ENCODE measurements at regions of chr11 and their contacts with region 1.

Region 1: DNA sequence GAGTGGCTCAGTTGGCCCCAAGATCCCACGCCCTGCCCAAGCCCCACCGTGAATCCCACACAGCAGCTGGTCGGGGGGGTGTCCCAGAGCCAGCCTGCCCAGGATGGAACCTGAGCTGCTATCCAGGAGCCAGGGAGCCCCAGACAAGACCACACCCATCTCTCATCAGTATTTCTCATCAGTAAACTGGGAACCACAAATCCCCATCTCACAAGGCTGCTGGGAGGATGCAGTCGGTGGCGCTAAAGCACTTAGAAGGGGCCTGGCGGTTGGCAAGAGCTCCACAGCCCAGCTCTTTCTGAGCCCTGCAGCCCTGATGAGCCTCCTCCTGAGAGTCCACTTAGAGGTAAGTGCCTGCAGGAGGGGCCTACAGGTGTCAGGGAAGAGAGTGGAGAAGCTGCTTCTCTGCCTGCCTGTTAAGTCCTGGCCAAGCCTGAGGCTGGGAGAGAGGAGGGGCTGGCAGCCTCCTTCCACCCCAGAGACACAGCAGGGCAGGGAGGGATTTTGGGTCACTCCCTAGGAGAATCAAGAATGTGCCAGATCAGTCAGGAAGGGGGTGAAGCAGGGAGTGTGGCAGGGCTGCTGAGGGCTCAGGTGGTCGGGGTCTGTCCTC is 6.1 kb downstream of the FADS3 start:
- DNase-seq: no peak
- ATAC-seq: peak; percentile 27
- H3K4me3 Mint-ChIP-seq: no peak overlapping the region
- H3K27ac Mint-ChIP-seq: no peak overlapping the region
- H3K4me1 Mint-ChIP-seq: peaks cover 22% of the 10 kb centered on the region
- H3K27me3 Mint-ChIP-seq: 0 out of 2 replicates have a peak, but pooled peaks cover 4% of the 10 kb centered on the region
- CTCF ChIP-seq: no peak

Region 2: DNA sequence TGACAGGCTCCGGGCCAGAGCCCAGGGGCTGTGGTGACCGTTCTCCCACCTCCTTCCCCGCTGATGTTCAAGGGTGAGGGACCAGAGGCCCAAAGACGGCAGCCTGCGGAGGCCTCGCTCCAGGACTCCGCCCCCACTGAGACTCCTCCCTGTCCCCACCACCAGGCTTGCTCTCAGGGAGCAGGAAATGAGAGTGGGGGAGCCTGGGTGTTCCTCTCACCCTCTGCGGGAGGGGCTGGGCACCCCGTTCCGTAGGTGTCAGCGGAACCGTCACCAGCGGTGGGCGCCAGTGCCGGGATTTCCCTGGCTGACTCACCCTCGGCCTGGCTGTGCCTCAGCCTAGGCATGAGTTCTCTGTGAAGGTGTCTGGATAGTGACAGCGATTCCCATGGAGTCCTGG is 189.4 kb before region 1 on chr11:
- CTCF ChIA-PET with region 1: no interaction called
- POLR2A ChIA-PET with region 1: no interaction called
- DNase-seq: no peak
- ATAC-seq: peak; percentile 51
- H3K4me3 Mint-ChIP-seq: no peak overlapping the region
- H3K27ac Mint-ChIP-seq: no peak overlapping the region
- H3K4me1 Mint-ChIP-seq: peaks cover 49% of the 10 kb centered on the region
- H3K27me3 Mint-ChIP-seq: no peaks in the 10 kb centered on the region; the same call in 1 of the 2 replicates
- CTCF ChIP-seq: no peak

Region 3: GRCh38 chr11:61871158-61871597 is 14.1 kb before region 1 on chr11:
- CTCF ChIA-PET with region 1: interaction called, 24 read pairs
- POLR2A ChIA-PET with region 1: interaction called, 4 read pairs
- DNase-seq: peak; percentile 92
- ATAC-seq: peak; percentile 87
- H3K4me3 Mint-ChIP-seq: peak overlapping the region; percentile 50
- H3K27ac Mint-ChIP-seq: no peak overlapping the region
- H3K4me1 Mint-ChIP-seq: peaks cover 18% of the 10 kb centered on the region
- H3K27me3 Mint-ChIP-seq: peaks cover 9% of the 10 kb centered on the region
- CTCF ChIP-seq: peak; percentile 87

Region 4: DNA sequence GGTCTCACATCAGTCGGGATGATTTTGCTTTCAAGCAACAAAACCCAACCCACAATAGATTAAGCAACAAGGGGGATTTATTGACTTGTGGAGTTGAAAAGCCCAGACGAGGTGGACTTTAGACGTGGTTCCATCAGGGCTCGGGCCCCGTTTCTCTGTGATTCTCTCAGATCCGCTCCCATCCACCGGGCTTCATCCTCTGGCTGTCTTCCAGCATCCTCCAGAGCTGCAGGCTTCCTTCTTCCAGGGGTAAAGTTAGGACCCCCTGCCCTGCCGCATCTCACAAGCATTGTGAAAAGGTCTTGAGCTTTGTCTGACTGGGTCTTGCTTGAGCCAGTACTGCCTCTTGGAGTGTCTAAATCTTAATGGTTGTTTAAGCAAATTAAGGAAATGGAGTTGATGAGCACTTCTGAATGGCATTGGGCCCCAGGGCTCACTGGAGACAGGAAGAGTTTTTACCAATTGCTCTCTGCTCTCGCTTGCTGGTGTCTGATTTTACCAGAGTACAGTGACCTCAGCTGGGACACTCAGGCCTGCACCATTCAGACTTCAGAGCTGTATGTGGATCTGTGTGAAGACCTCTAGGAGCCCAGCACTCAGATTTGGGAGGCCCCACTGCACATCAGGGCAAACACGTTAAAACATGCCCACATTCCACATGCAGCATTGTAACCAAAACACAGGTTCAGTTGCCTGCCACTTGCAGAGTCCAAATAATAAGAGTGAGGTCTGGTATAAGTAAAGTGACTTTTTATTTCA is 95.7 kb after region 1 on chr11:
- CTCF ChIA-PET with region 1: no interaction called
- POLR2A ChIA-PET with region 1: interaction called, 11 read pairs
- DNase-seq: no peak
- ATAC-seq: peak; percentile 25; the same call in 1 of the 2 replicates
- H3K4me3 Mint-ChIP-seq: no peak overlapping the region
- H3K27ac Mint-ChIP-seq: 0 out of 2 replicates have a peak overlapping the region, but pooled peaks have one; percentile 10
- H3K4me1 Mint-ChIP-seq: peaks cover 20% of the 10 kb centered on the region
- H3K27me3 Mint-ChIP-seq: peaks cover 54% of the 10 kb centered on the region
- CTCF ChIP-seq: no peak

Region 5: GRCh38 chr11:62024936-62025486 is 139.7 kb after region 1 on chr11:
- CTCF ChIA-PET with region 1: no interaction called
- POLR2A ChIA-PET with region 1: no interaction called
- DNase-seq: no peak
- ATAC-seq: no peak
- H3K4me3 Mint-ChIP-seq: no peak overlapping the region
- H3K27ac Mint-ChIP-seq: no peak overlapping the region
- H3K4me1 Mint-ChIP-seq: peaks cover 11% of the 10 kb centered on the region
- H3K27me3 Mint-ChIP-seq: peaks cover 4% of the 10 kb centered on the region; the same call in 1 of the 2 replicates
- CTCF ChIP-seq: no peak